Calu3 (cell line): ENCODE measurements at regions of chr14 and their contacts with region 1.

Region 1: GRCh38 chr14:46344327-46344937 is 307.1 kb downstream of the RPL10L start:
- DNase-seq: peak; percentile 4
- H3K4me3 Mint-ChIP-seq: no peak overlapping the region
- H3K27ac Mint-ChIP-seq: no peak overlapping the region
- H3K4me1 Mint-ChIP-seq: no peaks in the 10 kb centered on the region
- H3K27me3 Mint-ChIP-seq: no peaks in the 10 kb centered on the region
- CTCF ChIP-seq: peak; percentile 45

Region 2: DNA sequence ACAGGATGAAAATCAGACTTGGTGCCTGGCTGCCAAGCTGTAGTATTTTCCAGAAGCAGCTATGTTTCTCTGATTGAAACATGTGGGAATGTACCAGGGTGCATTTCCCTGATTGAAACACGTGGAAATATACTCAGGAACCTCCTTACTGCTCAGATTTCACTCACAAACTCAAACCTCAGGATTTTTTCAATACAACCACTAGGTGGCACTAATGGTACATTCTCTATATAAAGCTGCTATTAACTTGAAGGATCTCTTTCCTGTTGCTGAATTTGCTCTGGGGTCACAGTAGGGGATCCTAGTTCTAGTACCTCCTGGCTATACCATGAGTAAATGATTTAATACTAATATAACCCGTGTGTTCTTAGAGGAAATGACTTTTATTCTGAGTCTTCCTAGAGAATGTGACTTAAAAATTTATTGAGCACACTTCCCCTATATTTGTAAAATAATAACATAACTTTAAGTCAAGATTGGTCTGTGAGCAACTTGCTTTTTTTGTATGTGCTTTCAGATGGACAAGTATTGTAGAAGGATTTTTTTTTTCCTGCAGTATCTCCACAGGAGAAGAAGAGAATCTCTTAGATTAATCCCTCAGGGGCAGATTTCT is 917.7 kb before region 1 on chr14:
- CTCF ChIA-PET with region 1: no interaction called
- intact Hi-C with region 1: loop called (anchors 2 kb)
- DNase-seq: peak; percentile 6
- H3K4me3 Mint-ChIP-seq: no peak overlapping the region
- H3K27ac Mint-ChIP-seq: no peak overlapping the region
- H3K4me1 Mint-ChIP-seq: no peaks in the 10 kb centered on the region
- H3K27me3 Mint-ChIP-seq: peaks cover under 1% of the 10 kb centered on the region
- CTCF ChIP-seq: peak; percentile 59

Region 3: GRCh38 chr14:46048127-46048526 is 296.3 kb before region 1 on chr14:
- CTCF ChIA-PET with region 1: no interaction called
- intact Hi-C with region 1: loop called (anchors 10 kb)
- DNase-seq: peak; percentile 18
- H3K4me3 Mint-ChIP-seq: no peak overlapping the region
- H3K27ac Mint-ChIP-seq: no peak overlapping the region
- H3K4me1 Mint-ChIP-seq: no peaks in the 10 kb centered on the region
- H3K27me3 Mint-ChIP-seq: no peaks in the 10 kb centered on the region
- CTCF ChIP-seq: no peak

Region 4: GRCh38 chr14:46250113-46250703 is 94.2 kb before region 1 on chr14:
- CTCF ChIA-PET with region 1: no interaction called
- intact Hi-C with region 1: loop called (anchors 1 kb)
- DNase-seq: peak; percentile 3
- H3K4me3 Mint-ChIP-seq: no peak overlapping the region
- H3K27ac Mint-ChIP-seq: no peak overlapping the region
- H3K4me1 Mint-ChIP-seq: no peaks in the 10 kb centered on the region
- H3K27me3 Mint-ChIP-seq: no peaks in the 10 kb centered on the region
- CTCF ChIP-seq: peak; percentile 19